Tibial artery (tissue), 4 donors: ENCODE measurements at regions of chr11 and their contacts with region 1.

Region 1: GRCh38 chr11:46306296-46306853 is 28.9 kb downstream of the CREB3L1 start:
- DNase-seq: no peak
- H3K4me3 ChIP-seq: no peak overlapping the region
- H3K27ac ChIP-seq: no peak overlapping the region
- H3K4me1 ChIP-seq: no peaks in the 10 kb centered on the region
- H3K27me3 ChIP-seq: peaks cover 0 to 6% of the 10 kb centered on the region in 2 donors
- CTCF ChIP-seq: no peak

Region 2: GRCh38 chr11:46238967-46239800 is 67.2 kb before region 1 on chr11:
- intact Hi-C with region 1: loop called (anchors 2 kb)
- DNase-seq: peak; percentile 86 to 90
- H3K4me3 ChIP-seq: peak overlapping the region; percentile 45 to 59
- H3K27ac ChIP-seq: no peak overlapping the region
- H3K4me1 ChIP-seq: peaks cover 6 to 34% (median 27%) of the 10 kb centered on the region in 4 donors
- H3K27me3 ChIP-seq: peaks cover 0 to 23% of the 10 kb centered on the region in 2 donors
- CTCF ChIP-seq: peak; percentile 98 to 99